Naive thymus-derived CD4-positive, alpha-beta T cell (primary cell): ENCODE measurements at regions of chr20 and their contacts with region 1.

Region 1: DNA sequence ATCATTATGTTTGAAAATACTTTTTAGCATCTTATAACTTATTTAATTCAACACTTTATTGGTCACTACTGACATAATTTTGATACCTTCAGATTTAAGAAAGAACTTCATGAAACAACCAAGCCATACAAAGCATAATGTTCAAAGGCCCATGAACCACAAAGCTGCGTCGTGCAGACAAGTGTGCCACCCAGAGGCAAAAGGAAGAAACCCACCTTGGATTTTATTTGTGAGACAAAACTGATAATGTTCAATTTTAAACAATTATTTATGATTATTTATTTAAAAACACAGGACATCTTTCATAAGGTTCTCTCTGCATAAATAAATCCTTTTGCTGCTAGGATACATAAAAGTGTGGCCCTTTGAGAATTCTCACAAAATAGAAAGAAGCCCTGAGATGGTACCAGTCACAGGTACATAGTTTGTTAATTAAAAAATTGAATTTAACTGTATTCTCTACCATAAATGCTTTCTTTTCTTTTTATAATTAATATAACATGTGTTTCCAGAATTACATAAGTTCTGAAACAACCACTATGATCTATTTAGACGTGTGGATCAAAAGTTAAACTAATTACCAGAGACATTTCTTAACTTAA is 143.7 kb downstream of the RALGAPA2 start:
- DNase-seq: peak in 5 of 9 donors; percentile 1 to 29 (median 7)
- ATAC-seq: no peak
- H3K4me3 ChIP-seq: no peak overlapping the region
- H3K4me3 Mint-ChIP-seq: no peak overlapping the region
- H3K27ac ChIP-seq: no peak overlapping the region
- H3K27ac Mint-ChIP-seq: no peak overlapping the region
- H3K4me1 ChIP-seq: no peaks in the 10 kb centered on the region
- H3K4me1 Mint-ChIP-seq: no peaks in the 10 kb centered on the region
- H3K27me3 ChIP-seq: no peaks in the 10 kb centered on the region
- H3K27me3 Mint-ChIP-seq: no peaks in the 10 kb centered on the region

Region 2: GRCh38 chr20:20184149-20184548 is 384.6 kb before region 1 on chr20:
- CTCF ChIA-PET with region 1: no interaction called
- POLR2A ChIA-PET with region 1: no interaction called
- intact Hi-C with region 1: loop called in 1 of 2 experiments (anchors 10 kb)
- DNase-seq: no peak
- ATAC-seq: peak; percentile 45
- H3K4me3 ChIP-seq: no peak overlapping the region
- H3K4me3 Mint-ChIP-seq: no peak overlapping the region
- H3K27ac ChIP-seq: no peak overlapping the region
- H3K27ac Mint-ChIP-seq: no peak overlapping the region
- H3K4me1 ChIP-seq: no peaks in the 10 kb centered on the region
- H3K4me1 Mint-ChIP-seq: peaks cover 0 to 2% (median 0%) of the 10 kb centered on the region in 7 donors
- H3K27me3 ChIP-seq: no peaks in the 10 kb centered on the region
- H3K27me3 Mint-ChIP-seq: peaks cover 2 to 16% (median 9%) of the 10 kb centered on the region in 5 donors

Region 3: DNA sequence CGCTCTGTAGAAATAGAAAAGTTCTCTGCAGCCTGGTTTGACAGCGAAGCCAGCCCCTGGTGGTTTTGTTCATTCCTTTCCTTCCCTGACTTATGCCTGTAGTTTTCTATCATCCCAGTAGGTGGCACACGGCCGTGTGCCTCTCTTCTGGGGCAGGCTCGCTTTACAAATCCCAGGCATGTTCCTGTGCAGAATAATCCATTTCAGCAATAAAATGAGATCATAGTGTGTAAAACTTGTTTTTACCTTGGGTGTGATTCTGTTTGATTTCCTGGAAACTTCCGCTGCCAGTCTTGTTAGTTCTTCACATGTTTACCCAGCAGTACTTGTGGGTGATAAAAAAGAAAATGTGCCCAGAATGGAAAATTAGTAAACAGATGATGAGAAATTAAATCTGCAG is 208.2 kb before region 1 on chr20:
- CTCF ChIA-PET with region 1: no interaction called
- POLR2A ChIA-PET with region 1: no interaction called
- intact Hi-C with region 1: loop called (anchors 1 kb)
- DNase-seq: peak in 2 of 9 donors; percentile 5 to 26
- ATAC-seq: peak; percentile 72
- H3K4me3 ChIP-seq: no peak overlapping the region
- H3K4me3 Mint-ChIP-seq: peak overlapping the region in 7 of 10 donors; percentile 27 to 72 (median 55)
- H3K27ac ChIP-seq: no peak overlapping the region
- H3K27ac Mint-ChIP-seq: peak overlapping the region in 1 of 9 donors; percentile 0
- H3K4me1 ChIP-seq: peaks cover 0 to 10% of the 10 kb centered on the region in 2 donors
- H3K4me1 Mint-ChIP-seq: peaks cover 0 to 31% (median 24%) of the 10 kb centered on the region in 7 donors
- H3K27me3 ChIP-seq: no peaks in the 10 kb centered on the region
- H3K27me3 Mint-ChIP-seq: peaks cover 42 to 56% (median 51%) of the 10 kb centered on the region in 5 donors